Ovary (tissue), 10 donors: ENCODE measurements at regions of chr14 and their contacts with region 1.

Region 1: GRCh38 chr14:92934196-92935085 is 11.5 kb downstream of the CHGA start:
- DNase-seq: no peak
- H3K4me3 ChIP-seq: no peak overlapping the region
- H3K27ac ChIP-seq: no peak overlapping the region
- H3K4me1 ChIP-seq: no peaks in the 10 kb centered on the region
- H3K27me3 ChIP-seq: no peaks in the 10 kb centered on the region
- CTCF ChIP-seq: no peak
- EP300 ChIP-seq: no peak
- POLR2A ChIP-seq: no peak

Region 2: DNA sequence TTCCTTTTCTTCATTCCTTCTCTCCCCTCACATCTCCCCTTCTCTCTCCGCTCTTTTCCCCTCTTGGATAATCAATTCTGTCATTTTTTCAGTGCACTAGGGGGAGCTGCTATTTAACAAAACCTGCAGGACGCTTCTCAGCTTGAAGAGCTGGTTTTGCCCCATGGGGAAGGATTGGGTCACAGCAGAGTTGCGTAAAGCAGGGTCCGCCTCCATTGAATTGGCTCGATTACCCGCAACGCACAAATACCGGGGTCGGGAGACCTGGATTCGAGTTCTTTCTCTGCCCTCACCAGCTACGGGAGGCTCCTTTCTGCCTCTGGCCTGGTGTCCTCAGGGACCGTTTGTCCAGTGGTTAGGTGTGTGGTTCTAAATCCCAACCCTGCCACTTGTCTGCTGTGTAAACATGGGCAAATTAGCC is 53.6 kb before region 1 on chr14:
- intact Hi-C with region 1: no loop called
- DNase-seq: no peak
- H3K4me3 ChIP-seq: no peak overlapping the region
- H3K27ac ChIP-seq: no peak overlapping the region
- H3K4me1 ChIP-seq: peaks cover 6% of the 10 kb centered on the region
- H3K27me3 ChIP-seq: no peaks in the 10 kb centered on the region
- CTCF ChIP-seq: no peak
- EP300 ChIP-seq: no peak
- POLR2A ChIP-seq: no peak

Region 3: GRCh38 chr14:93033983-93034670 is 99.7 kb after region 1 on chr14:
- intact Hi-C with region 1: no loop called
- DNase-seq: no peak
- H3K4me3 ChIP-seq: no peak overlapping the region
- H3K27ac ChIP-seq: no peak overlapping the region
- H3K4me1 ChIP-seq: peaks cover 20% of the 10 kb centered on the region
- H3K27me3 ChIP-seq: no peaks in the 10 kb centered on the region
- CTCF ChIP-seq: no peak
- EP300 ChIP-seq: no peak
- POLR2A ChIP-seq: no peak

Region 4: GRCh38 chr14:93078870-93079269 is 144.4 kb after region 1 on chr14:
- intact Hi-C with region 1: loop called in 1 of 4 experiments (anchors 1 kb)
- DNase-seq: no peak
- H3K4me3 ChIP-seq: no peak overlapping the region
- H3K27ac ChIP-seq: no peak overlapping the region
- H3K4me1 ChIP-seq: no peaks in the 10 kb centered on the region
- H3K27me3 ChIP-seq: no peaks in the 10 kb centered on the region
- CTCF ChIP-seq: no peak
- EP300 ChIP-seq: no peak
- POLR2A ChIP-seq: no peak

Region 5: GRCh38 chr14:93231129-93231979 is 296.9 kb after region 1 on chr14:
- intact Hi-C with region 1: no loop called
- DNase-seq: peak in 3 of 5 donors; percentile 33 to 56 (median 50)
- H3K4me3 ChIP-seq: peak overlapping the region; percentile 33
- H3K27ac ChIP-seq: no peak overlapping the region
- H3K4me1 ChIP-seq: peaks cover 4% of the 10 kb centered on the region
- H3K27me3 ChIP-seq: no peaks in the 10 kb centered on the region
- CTCF ChIP-seq: no peak
- EP300 ChIP-seq: no peak
- POLR2A ChIP-seq: no peak